Prostate gland (tissue), 2 donors: ENCODE measurements at regions of chr10 and their contacts with region 1.

Region 1: GRCh38 chr10:99450624-99451498 is 20.4 kb upstream of the GOT1 start:
- DNase-seq: no peak
- H3K4me3 ChIP-seq: no peak overlapping the region
- H3K27ac ChIP-seq: no peak overlapping the region
- H3K4me1 ChIP-seq: no peaks in the 10 kb centered on the region
- H3K27me3 ChIP-seq: no peaks in the 10 kb centered on the region
- CTCF ChIP-seq: no peak
- POLR2A ChIP-seq: no peak

Region 2: DNA sequence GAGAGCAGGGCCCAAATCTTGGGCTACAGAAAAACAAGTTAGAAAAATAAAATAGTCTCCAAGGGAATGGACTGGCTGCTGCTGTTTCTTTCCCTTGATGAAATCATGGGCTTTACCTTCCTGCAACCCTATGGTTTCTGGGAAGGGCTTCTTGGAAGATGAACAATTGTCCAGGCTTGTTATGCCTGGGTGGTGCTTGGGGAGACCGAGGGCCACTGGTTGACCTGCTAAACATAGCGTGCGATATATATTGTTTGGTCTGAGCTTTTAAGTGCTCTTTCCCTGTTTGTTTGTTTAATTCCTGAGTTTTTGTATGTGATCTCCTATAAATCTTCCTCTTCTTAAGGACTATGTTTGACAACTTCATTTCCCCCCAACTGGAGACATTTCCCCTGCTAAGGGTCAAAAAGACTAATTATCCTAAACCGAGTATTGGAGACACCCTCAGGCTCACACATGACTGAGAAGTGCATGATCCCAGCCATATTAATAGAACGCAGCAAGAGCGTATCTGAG is 131.5 kb after region 1 on chr10:
- intact Hi-C with region 1: loop called (anchors 10 kb)
- DNase-seq: no peak
- H3K4me3 ChIP-seq: no peak overlapping the region
- H3K27ac ChIP-seq: no peak overlapping the region
- H3K4me1 ChIP-seq: no peaks in the 10 kb centered on the region
- H3K27me3 ChIP-seq: no peaks in the 10 kb centered on the region
- CTCF ChIP-seq: no peak
- POLR2A ChIP-seq: no peak